ENCODE measurements at regions of chr14 and their contacts with region 1.

Region 1: DNA sequence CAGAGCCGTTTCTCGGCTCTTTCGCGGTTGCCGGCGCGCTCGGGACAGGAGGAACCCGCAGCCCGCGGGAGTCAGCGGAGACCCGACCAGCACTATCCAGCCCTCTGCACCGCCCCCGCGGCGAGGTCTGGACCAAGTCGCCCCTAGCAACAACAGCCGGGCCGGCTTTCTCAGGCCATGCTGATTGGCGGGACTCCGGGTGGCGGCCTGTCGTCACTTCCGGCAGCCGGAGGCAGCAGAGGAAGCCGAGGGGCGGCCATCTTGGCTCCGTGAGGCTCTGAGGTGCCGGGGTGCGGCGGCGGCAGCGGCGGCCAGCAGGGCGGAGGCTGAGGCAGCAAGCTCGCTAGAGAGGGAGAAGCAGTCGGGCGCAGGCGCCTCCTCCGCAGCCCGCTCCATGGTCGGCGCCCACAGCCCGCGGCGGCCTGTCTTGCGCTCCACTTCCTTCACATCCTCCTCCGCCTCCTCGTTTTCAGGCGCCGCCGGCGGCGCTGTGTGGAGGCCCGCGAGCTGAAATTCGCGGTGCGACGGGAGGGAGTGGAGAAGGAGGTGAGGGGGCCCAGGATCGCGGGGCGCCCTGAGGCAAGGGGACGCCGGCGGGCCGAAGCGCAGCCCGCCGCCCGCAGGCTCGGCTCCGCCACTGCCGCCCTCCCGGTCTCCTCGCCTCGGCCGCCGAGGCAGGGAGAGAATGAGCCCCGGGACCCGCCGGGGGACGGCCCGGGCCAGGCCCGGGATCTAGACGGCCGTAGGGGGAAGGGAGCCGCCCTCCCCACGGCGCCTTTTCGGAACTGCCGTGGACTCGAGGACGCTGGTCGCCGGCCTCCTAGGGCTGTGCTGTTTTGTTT is at the start of gene MARK3:
- DNase-seq: peak; percentile 98

Region 2: GRCh38 chr14:103346286-103346685 is 39.1 kb before region 1 on chr14:
- CTCF ChIA-PET with region 1: interaction called, 4 read pairs
- POLR2A ChIA-PET with region 1: interaction called, 10 read pairs
- DNase-seq: no peak

Region 3: GRCh38 chr14:103366741-103367140 is 18.6 kb before region 1 on chr14:
- CTCF ChIA-PET with region 1: no interaction called
- POLR2A ChIA-PET with region 1: no interaction called
- DNase-seq: no peak

Region 4: DNA sequence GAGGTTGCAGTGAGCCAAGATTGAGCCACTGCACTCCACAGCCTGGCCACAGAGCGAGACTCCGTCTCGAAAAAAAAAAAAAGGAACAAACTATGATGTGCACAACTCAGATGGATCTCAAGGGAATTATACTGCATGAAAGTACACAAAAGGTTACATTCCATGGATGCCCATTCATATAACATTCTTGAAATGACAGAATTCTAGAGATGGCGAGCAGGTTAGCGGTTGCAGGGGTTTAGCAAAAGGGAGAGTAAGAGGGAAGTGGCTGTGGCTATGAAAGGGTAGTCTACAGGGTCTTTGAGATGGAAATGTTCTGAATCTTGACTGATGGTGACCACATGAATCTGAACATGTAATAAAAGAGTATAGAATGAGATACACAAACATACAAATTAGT is 87.6 kb after region 1 on chr14:
- CTCF ChIA-PET with region 1: no interaction called
- POLR2A ChIA-PET with region 1: no interaction called
- DNase-seq: no peak

Region 5: GRCh38 chr14:103508521-103509329 is 123.4 kb after region 1 on chr14:
- CTCF ChIA-PET with region 1: no interaction called
- POLR2A ChIA-PET with region 1: no interaction called
- DNase-seq: no peak

Measured in HEK293T (cell line).